ENCODE measurements at regions of chr3 and their contacts with region 1.

Region 1: DNA sequence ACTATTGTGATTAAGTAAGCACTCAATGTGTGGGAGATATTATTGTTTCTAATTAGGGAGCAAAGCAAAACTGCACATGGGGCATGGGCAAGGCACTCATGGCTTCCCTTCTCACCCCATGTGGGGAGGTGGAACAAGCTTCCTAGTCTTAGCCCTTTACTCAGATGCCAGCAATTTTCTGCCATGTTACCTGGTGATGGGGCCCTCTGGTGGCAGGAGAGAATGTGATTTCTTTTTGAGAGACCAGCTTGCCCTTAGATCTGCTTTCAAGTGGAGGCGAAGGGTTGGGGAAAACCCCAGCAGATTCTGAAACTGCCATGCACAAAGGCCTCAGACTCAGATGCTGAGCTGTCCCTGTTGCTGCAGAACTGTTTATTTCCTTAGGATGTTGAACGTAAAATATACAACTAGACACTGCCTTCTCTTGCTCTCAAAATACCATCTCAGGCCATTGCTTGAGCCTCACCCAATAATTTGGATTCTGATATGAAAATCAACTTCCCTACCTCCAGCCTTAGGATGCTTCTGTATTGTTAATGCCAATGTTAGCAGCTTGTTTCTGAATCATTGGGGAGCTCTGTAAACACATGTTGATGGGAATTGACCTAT is 130.2 kb upstream of the TPRG1 start:
- DNase-seq: peak; percentile 89
- ATAC-seq: peak; percentile 90
- H3K4me3 Mint-ChIP-seq: no peak overlapping the region
- H3K27ac Mint-ChIP-seq: peak overlapping the region; percentile 75
- H3K4me1 Mint-ChIP-seq: peaks cover 45% of the 10 kb centered on the region
- H3K27me3 Mint-ChIP-seq: no peaks in the 10 kb centered on the region
- CTCF ChIP-seq: peak; percentile 85

Region 2: DNA sequence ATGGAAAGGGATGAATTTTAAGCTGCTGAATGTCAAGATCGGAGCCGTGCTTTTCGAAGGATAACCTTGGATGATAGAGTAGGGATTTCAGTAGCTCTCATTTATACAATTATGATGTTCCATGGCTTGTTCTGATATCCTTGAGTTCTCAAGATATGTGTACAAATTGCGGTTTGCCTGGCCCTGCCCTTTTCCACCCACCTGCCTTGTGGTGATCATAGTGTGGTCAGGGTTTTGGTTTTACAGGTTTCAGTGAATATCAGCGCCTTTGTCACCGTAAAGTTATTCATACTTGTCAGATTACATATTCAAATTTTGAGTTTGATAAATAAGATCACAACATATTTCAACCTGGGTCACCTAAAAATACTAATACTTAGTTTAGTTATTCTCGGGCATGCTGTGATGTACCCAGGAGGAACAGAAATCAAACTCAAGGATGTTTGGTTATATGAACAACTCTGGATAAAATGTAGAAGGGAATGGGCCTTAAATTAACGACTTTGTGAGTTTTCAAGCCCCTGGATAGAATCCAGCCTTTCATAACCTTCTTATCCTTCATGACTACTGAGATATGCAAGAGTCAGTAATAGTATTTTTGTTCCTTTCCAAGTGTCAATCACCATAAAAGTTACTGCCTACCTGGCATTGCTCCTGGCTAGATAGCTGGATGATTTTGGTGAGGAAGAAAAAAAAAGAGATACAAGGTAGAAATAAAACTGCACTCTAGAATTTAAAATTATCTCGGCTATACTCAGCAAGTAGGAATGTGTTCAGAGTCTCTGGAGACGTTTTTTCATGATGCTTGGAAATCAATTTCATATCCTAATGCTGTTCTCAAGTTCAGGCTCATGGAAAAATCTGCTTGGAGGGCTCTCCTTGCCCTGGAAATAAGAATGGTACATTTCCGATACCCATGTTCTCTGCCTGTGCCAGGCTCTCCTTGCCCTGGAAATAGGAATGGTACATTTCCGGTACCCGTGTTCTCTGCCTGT is 79.0 kb before region 1 on chr3:
- CTCF ChIA-PET with region 1: interaction called, 94 read pairs
- POLR2A ChIA-PET with region 1: no interaction called
- intact Hi-C with region 1: loop called (anchors 5 kb)
- DNase-seq: peak; percentile 45
- ATAC-seq: no peak
- H3K4me3 Mint-ChIP-seq: no peak overlapping the region
- H3K27ac Mint-ChIP-seq: no peak overlapping the region
- H3K4me1 Mint-ChIP-seq: peaks cover 16% of the 10 kb centered on the region
- H3K27me3 Mint-ChIP-seq: peaks cover 7% of the 10 kb centered on the region
- CTCF ChIP-seq: no peak

Region 3: DNA sequence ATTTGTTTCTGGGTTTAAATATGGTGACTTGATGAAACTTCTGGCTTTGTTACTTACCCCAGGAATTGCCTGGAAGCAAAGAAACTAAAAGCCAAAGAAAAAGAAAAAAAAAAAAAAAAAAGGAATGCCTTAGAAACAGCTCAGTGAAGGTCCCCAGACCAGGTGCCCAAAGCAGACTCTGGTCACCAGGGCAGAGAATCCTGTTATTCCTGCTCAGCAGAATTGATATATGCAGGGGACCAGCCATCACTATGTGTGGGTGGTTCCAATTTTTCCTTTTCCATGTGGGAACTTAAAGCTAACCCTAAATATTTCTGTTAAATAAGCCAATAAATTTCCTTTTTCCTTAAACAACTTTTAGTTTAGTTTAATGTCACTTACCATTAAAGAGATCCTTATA is 29.4 kb after region 1 on chr3:
- CTCF ChIA-PET with region 1: interaction called, 10 read pairs
- POLR2A ChIA-PET with region 1: interaction called, 4 read pairs
- intact Hi-C with region 1: no loop called
- DNase-seq: no peak
- ATAC-seq: no peak
- H3K4me3 Mint-ChIP-seq: no peak overlapping the region
- H3K27ac Mint-ChIP-seq: no peak overlapping the region
- H3K4me1 Mint-ChIP-seq: peaks cover 8% of the 10 kb centered on the region
- H3K27me3 Mint-ChIP-seq: peaks cover 2% of the 10 kb centered on the region
- CTCF ChIP-seq: no peak

Region 4: DNA sequence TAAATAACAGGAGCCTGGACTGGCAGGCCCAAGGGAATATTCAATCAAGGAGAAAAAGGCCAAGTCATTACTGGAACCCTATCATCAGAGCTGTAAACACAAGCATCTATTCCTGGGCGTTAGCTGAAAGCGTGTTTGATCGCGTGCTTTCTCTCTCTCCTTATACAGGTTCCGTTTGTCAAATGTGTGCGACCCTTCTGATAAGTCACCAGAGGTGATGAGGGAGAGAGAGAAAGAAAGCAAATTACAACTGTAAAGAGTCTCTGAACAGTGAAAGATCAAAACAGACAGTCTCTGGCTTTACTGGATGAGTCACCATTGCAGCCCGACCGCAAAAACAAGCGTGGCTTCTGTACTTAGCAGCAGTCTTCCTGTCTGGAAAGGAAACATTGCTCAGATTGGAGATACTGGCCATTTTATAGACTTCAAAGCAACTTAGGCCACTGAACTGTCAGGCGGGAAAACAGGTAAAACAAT is 90.7 kb after region 1 on chr3:
- CTCF ChIA-PET with region 1: interaction called, 24 read pairs
- POLR2A ChIA-PET with region 1: no interaction called
- intact Hi-C with region 1: loop called (anchors 5 kb)
- DNase-seq: peak; percentile 93
- ATAC-seq: peak; percentile 94
- H3K4me3 Mint-ChIP-seq: peak overlapping the region; percentile 44
- H3K27ac Mint-ChIP-seq: peak overlapping the region; percentile 91
- H3K4me1 Mint-ChIP-seq: peaks cover 22% of the 10 kb centered on the region
- H3K27me3 Mint-ChIP-seq: no peaks in the 10 kb centered on the region
- CTCF ChIP-seq: no peak

Region 5: DNA sequence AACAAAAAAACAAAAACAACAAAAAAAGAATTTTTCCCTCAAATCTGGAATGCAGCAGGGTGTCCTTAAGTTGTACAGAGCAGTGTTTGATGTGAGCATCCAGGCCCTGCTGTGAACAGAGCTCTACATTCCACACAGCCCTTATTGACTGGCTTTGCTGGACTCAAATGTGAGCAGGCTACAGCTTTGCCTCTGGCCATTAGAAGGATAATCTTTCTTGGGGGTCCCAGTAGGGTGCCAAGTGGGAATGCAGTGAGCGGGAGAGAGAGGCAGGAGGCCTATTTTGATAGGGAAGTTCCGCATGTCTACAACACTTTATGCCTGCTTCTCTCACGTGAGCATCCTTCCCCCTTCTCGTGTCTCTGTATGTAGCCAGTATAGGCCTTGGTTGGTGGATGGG is 95.8 kb after region 1 on chr3:
- CTCF ChIA-PET with region 1: interaction called, 26 read pairs
- POLR2A ChIA-PET with region 1: no interaction called
- intact Hi-C with region 1: loop called (anchors 5 kb)
- DNase-seq: no peak
- ATAC-seq: no peak
- H3K4me3 Mint-ChIP-seq: no peak overlapping the region
- H3K27ac Mint-ChIP-seq: no peak overlapping the region
- H3K4me1 Mint-ChIP-seq: peaks cover 26% of the 10 kb centered on the region
- H3K27me3 Mint-ChIP-seq: peaks cover 4% of the 10 kb centered on the region
- CTCF ChIP-seq: no peak

Region 6: GRCh38 chr3:189142527-189142926 is 100.9 kb after region 1 on chr3:
- CTCF ChIA-PET with region 1: interaction called, 28 read pairs
- POLR2A ChIA-PET with region 1: no interaction called
- intact Hi-C with region 1: no loop called
- DNase-seq: peak; percentile 57
- ATAC-seq: peak; percentile 87
- H3K4me3 Mint-ChIP-seq: no peak overlapping the region
- H3K27ac Mint-ChIP-seq: no peak overlapping the region
- H3K4me1 Mint-ChIP-seq: peaks cover 33% of the 10 kb centered on the region
- H3K27me3 Mint-ChIP-seq: peaks cover 4% of the 10 kb centered on the region
- CTCF ChIP-seq: no peak

Region 7: DNA sequence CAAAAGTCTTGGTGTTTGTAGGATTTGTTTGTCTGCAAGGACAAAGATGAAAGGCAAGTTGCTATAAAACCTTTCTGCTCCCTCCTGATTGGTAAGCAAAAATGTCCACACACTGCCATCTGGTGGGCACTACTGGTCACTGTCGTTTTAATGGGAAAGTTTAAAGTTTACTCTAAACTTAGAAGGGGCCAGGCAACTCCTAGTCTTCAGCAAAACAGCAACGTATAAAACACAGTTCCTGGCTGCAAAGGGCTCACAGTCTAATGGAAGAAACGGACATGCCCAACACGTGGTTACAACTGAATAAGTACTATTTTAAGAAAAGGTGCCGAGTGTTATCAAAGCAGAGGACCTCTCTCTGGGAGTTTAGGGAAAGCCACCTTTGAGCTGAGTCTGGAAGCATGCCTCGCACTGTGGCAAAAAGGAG is 106.5 kb after region 1 on chr3:
- CTCF ChIA-PET with region 1: interaction called, 28 read pairs
- POLR2A ChIA-PET with region 1: no interaction called
- intact Hi-C with region 1: no loop called
- DNase-seq: peak; percentile 81
- ATAC-seq: peak; percentile 88
- H3K4me3 Mint-ChIP-seq: no peak overlapping the region
- H3K27ac Mint-ChIP-seq: no peak overlapping the region
- H3K4me1 Mint-ChIP-seq: peaks cover 24% of the 10 kb centered on the region
- H3K27me3 Mint-ChIP-seq: no peaks in the 10 kb centered on the region
- CTCF ChIP-seq: peak; percentile 83

Measured in activated CD8-positive, alpha-beta T cell treated with anti-CD3 and anti-CD28 coated beads for 36 hours (primary cell).